Caco-2 (cell line): ENCODE measurements at regions of chr12 and their contacts with region 1.

Region 1: DNA sequence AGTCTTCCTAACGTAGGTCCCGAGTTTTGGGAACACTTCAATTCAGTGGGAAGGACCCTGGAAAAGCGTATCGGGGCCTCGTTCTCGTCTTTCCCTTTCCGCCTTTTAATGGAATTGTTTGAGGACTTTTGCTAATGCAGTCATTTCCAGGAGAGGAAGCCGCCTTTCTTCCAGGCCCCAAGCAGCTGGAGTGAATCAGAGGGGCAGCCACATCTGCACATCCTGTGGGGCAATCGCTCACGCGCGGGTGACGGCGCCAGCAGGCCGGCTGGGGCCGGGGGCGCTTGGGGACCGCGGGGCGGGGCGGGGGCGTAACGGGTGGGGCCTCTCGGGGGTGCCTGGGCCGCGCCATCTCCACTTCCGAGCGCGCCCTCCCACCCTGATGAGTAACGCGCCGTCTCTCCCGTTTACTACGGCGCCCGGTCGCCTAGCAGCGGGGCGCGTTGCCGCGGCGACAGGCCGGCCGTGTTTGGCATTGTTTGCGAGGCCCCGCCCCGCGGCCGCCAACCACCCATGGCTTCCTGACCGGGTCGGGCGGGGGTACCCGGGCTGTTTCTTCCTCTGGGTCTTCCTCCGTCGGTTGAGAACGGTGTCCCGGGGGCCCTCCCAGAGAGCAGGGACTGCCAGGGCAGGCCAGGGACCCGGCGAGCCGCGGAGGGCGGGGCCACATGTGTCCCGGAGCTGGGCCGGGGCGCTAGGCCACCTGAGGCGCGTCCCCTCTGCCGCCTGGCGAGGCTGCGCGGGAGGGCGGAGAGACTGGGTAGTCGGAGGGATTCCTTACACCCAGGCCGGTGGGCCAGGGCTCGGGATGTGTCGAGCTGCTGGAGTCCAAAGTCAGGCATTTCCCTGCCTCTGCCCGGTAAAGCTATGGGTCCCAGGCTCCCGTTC is 2.3 kb downstream of the GSG1 start:
- DNase-seq: peak; percentile 89 to 96
- H3K4me3 ChIP-seq: peak overlapping the region; percentile 79
- H3K4me3 Mint-ChIP-seq: peak overlapping the region; percentile 75
- H3K27ac Mint-ChIP-seq: peak overlapping the region; percentile 81
- H3K4me1 ChIP-seq: peaks cover 44% of the 10 kb centered on the region
- H3K4me1 Mint-ChIP-seq: peaks cover 47% of the 10 kb centered on the region
- H3K27me3 ChIP-seq: no peaks in the 10 kb centered on the region
- H3K27me3 Mint-ChIP-seq: no peaks in the 10 kb centered on the region
- CTCF ChIP-seq: no peak

Region 2: GRCh38 chr12:12786716-12787601 is 314.2 kb before region 1 on chr12:
- CTCF ChIA-PET with region 1: no interaction called
- POLR2A ChIA-PET with region 1: interaction called, 10 read pairs
- intact Hi-C with region 1: no loop called
- DNase-seq: peak; percentile 89 to 94
- H3K4me3 ChIP-seq: peak overlapping the region; percentile 65
- H3K4me3 Mint-ChIP-seq: peak overlapping the region; percentile 88
- H3K27ac Mint-ChIP-seq: peak overlapping the region; percentile 95
- H3K4me1 ChIP-seq: peaks cover 48% of the 10 kb centered on the region
- H3K4me1 Mint-ChIP-seq: peaks cover 23% of the 10 kb centered on the region
- H3K27me3 ChIP-seq: no peaks in the 10 kb centered on the region
- H3K27me3 Mint-ChIP-seq: no peaks in the 10 kb centered on the region
- CTCF ChIP-seq: peak in 1 of 2 experiments; percentile 26

Region 3: DNA sequence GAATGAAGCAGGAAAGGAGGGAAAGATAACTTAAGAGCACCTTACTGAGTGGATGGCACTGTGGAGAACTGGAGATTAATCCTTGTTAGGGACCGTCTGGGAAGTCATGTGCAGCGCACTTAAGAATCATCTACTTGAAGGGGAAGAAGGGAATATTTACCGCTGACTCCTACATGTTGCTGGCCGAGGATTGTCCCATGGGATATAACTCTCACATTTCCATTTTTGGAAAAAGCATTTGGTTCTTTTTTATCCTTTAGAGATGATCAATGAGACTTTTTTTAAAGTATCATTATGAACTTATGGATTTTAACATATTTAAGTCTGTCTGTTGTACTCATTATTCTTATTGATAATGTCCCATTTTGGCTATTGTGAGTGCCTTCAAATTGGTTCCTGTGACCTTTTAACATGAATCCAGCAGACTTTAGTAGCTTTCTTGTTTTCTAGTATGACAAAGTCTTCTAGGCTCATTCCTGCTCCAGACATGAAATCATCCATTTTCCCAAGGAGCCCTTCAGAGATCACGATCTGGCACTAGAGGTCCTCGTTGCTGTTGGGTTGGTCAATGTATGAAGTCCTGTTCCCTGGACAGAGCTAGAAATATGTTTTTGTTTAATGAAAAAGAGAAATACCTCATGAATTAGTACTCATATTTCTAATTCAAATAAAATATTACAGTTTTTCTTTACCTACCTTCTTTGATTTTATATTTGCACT is 77.2 kb before region 1 on chr12:
- CTCF ChIA-PET with region 1: no interaction called
- POLR2A ChIA-PET with region 1: no interaction called
- intact Hi-C with region 1: loop called (anchors 5 kb)
- DNase-seq: no peak
- H3K4me3 ChIP-seq: no peak overlapping the region
- H3K4me3 Mint-ChIP-seq: no peak overlapping the region
- H3K27ac Mint-ChIP-seq: no peak overlapping the region
- H3K4me1 ChIP-seq: no peaks in the 10 kb centered on the region
- H3K4me1 Mint-ChIP-seq: no peaks in the 10 kb centered on the region
- H3K27me3 ChIP-seq: no peaks in the 10 kb centered on the region
- H3K27me3 Mint-ChIP-seq: peaks cover 8% of the 10 kb centered on the region
- CTCF ChIP-seq: peak in 1 of 2 experiments; percentile 53

Region 4: GRCh38 chr12:13135371-13136178 is 34.4 kb after region 1 on chr12:
- CTCF ChIA-PET with region 1: interaction called, 4 read pairs
- POLR2A ChIA-PET with region 1: interaction called, 5 read pairs
- intact Hi-C with region 1: loop called (anchors 1 kb)
- DNase-seq: peak; percentile 83 to 89
- H3K4me3 ChIP-seq: no peak overlapping the region
- H3K4me3 Mint-ChIP-seq: peak overlapping the region; percentile 51
- H3K27ac Mint-ChIP-seq: peak overlapping the region; percentile 76
- H3K4me1 ChIP-seq: peaks cover 36% of the 10 kb centered on the region
- H3K4me1 Mint-ChIP-seq: peaks cover 45% of the 10 kb centered on the region
- H3K27me3 ChIP-seq: no peaks in the 10 kb centered on the region
- H3K27me3 Mint-ChIP-seq: no peaks in the 10 kb centered on the region
- CTCF ChIP-seq: peak in 1 of 2 experiments; percentile 21

Region 5: GRCh38 chr12:13203034-13203922 is 102.2 kb after region 1 on chr12:
- CTCF ChIA-PET with region 1: interaction called, 6 read pairs
- POLR2A ChIA-PET with region 1: no interaction called
- intact Hi-C with region 1: loop called (anchors 1 kb)
- DNase-seq: peak; percentile 52 to 71
- H3K4me3 ChIP-seq: no peak overlapping the region
- H3K4me3 Mint-ChIP-seq: no peak overlapping the region
- H3K27ac Mint-ChIP-seq: no peak overlapping the region
- H3K4me1 ChIP-seq: peaks cover 1% of the 10 kb centered on the region
- H3K4me1 Mint-ChIP-seq: peaks cover 10% of the 10 kb centered on the region
- H3K27me3 ChIP-seq: no peaks in the 10 kb centered on the region
- H3K27me3 Mint-ChIP-seq: no peaks in the 10 kb centered on the region
- CTCF ChIP-seq: peak; percentile 47 to 60